ENCODE measurements at regions of chr6 and their contacts with region 1.

Region 1: DNA sequence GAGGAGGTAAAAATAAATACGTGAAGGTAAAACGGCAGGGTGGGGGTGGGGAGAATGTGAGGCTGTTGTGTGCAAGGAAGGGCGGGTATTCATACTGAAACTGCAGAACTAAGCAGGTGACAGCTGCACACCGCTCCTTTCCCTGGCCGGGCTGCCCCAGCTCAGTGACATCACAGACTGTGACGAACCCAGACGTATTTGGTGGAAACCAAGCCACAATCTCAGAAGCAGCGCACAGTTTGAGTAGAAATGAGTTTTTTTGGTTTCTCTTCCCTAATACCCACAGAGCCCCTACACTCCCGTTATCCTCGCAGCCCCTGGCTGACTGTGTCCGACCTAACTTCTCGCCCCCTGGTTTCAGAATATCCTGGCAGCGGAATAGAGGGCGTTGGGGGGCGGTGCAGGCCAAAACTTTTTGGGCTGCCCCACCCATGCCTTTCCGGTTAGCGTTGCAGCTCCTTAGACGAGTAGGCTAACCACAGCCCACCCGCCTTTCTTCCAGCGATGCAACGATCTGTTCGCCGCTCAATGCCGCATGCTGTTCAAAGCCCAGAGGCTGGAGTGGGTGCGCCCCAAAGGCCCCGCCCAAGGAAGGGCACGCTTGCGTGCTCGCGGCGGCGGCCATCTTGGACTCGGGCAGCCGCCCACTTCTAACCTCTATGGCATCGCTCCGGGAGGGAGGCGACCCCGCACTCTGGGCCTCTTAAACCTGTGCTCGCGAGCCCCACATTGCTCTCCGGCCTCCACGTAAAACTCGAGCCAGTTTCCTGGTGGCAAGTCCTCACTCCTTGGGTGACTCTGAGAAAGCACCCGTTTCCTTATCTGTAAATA is 9.1 kb downstream of the BAK1 start:
- DNase-seq: peak; percentile 94
- H3K4me3 Mint-ChIP-seq: peak overlapping the region; percentile 85
- H3K27ac Mint-ChIP-seq: peak overlapping the region; percentile 99
- H3K4me1 Mint-ChIP-seq: peaks cover 41% of the 10 kb centered on the region
- H3K27me3 Mint-ChIP-seq: no peaks in the 10 kb centered on the region

Region 2: GRCh38 chr6:33620856-33621710 is 50.1 kb after region 1 on chr6 and contains the start of gene ITPR3:
- intact Hi-C with region 1: loop called (anchors 2 kb)
- DNase-seq: peak; percentile 73
- H3K4me3 Mint-ChIP-seq: peak within 1 kb of the TSS; percentile 95
- H3K27ac Mint-ChIP-seq: peak within 1 kb of the TSS; percentile 81
- H3K4me1 Mint-ChIP-seq: peaks cover 35% of the 10 kb centered on the region
- H3K27me3 Mint-ChIP-seq: no peaks in the 10 kb centered on the region
- total RNA-seq, gene ITPR3: 40.7 and 41.7 TPM in 2 replicates

Measured in activated T-helper 2 cell treated with anti-CD3 and anti-CD28 coated beads, Interferon-gamma antibody, Interleukin-2, Interleukin-4, amounts not matched to agents 10 μg/mL and 5 μg/mL and 100 μg/mL, durations not matched to agents 14 hours and 24 hours and 36 hours (primary cell).